ENCODE measurements at regions of chr3 and their contacts with region 1.

Region 1: GRCh38 chr3:52225452-52226228 is at the start of gene TLR9:
- DNase-seq: peak; percentile 77
- ATAC-seq: peak; percentile 87
- H3K4me3 Mint-ChIP-seq: peak within 1 kb of the TSS; percentile 90
- H3K27ac Mint-ChIP-seq: peak within 1 kb of the TSS; percentile 97
- H3K4me1 Mint-ChIP-seq: peaks cover 77% of the 10 kb centered on the region
- H3K27me3 Mint-ChIP-seq: no peaks in the 10 kb centered on the region
- CTCF ChIP-seq: no peak
- total RNA-seq, gene TLR9: 10.4 and 11.4 TPM in 2 replicates

Region 2: DNA sequence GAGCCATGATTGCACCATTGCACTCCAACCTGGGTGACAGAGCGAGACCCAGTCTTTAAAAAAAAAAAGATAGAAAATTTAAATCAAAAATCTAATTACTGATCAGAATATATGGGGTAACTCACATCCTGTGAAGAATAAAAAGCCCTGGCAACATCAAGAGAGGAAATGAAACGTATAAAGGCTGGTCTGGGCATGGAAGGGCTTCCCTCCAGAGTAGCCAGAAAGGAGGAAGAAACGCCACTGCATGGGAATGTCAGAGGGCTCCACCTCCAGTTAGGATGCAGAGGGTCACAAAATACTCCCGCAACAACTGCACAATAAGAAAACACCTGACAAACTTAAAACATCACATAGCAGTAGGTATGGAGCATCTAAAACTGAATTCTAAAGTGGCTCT is 317.6 kb before region 1 on chr3:
- CTCF ChIA-PET with region 1: no interaction called
- POLR2A ChIA-PET with region 1: no interaction called
- intact Hi-C with region 1: no loop called
- DNase-seq: no peak
- ATAC-seq: no peak
- H3K4me3 Mint-ChIP-seq: no peak overlapping the region
- H3K27ac Mint-ChIP-seq: no peak overlapping the region
- H3K4me1 Mint-ChIP-seq: no peaks in the 10 kb centered on the region
- H3K27me3 Mint-ChIP-seq: peaks cover 23% of the 10 kb centered on the region
- CTCF ChIP-seq: no peak

Region 3: DNA sequence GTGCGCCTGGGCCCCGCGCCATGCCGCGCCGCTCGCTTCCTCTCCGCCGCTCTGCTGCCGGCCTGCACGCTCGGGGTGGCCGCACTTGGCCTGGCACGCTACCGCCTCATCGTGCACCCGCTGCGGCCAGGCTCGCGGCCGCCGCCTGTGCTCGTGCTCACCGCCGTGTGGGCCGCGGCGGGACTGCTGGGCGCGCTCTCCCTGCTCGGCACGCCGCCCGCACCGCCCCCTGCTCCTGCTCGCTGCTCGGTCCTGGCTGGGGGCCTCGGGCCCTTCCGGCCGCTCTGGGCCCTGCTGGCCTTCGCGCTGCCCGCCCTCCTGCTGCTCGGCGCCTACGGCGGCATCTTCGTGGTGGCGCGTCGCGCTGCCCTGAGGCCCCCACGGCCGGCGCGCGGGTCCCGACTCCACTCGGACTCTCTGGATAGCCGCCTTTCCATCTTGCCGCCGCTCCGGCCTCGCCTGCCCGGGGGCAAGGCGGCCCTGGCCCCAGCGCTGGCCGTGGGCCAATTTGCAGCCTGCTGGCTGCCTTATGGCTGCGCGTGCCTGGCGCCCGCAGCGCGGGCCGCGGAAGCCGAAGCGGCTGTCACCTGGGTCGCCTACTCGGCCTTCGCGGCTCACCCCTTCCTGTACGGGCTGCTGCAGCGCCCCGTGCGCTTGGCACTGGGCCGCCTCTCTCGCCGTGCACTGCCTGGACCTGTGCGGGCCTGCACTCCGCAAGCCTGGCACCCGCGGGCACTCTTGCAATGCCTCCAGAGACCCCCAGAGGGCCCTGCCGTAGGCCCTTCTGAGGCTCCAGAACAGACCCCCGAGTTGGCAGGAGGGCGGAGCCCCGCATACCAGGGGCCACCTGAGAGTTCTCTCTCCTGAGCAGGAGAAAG is 269.5 kb before region 1 on chr3:
- CTCF ChIA-PET with region 1: no interaction called
- POLR2A ChIA-PET with region 1: no interaction called
- intact Hi-C with region 1: no loop called
- DNase-seq: peak; percentile 47
- ATAC-seq: peak; percentile 83
- H3K4me3 Mint-ChIP-seq: peak overlapping the region; percentile 24
- H3K27ac Mint-ChIP-seq: no peak overlapping the region
- H3K4me1 Mint-ChIP-seq: peaks cover 2% of the 10 kb centered on the region
- H3K27me3 Mint-ChIP-seq: peaks cover 19% of the 10 kb centered on the region
- CTCF ChIP-seq: no peak

Region 4: GRCh38 chr3:52093756-52094545 is 131.7 kb before region 1 on chr3:
- CTCF ChIA-PET with region 1: no interaction called
- POLR2A ChIA-PET with region 1: no interaction called
- intact Hi-C with region 1: no loop called
- DNase-seq: no peak
- ATAC-seq: no peak
- H3K4me3 Mint-ChIP-seq: no peak overlapping the region
- H3K27ac Mint-ChIP-seq: no peak overlapping the region
- H3K4me1 Mint-ChIP-seq: no peaks in the 10 kb centered on the region
- H3K27me3 Mint-ChIP-seq: no peaks in the 10 kb centered on the region
- CTCF ChIP-seq: no peak

Region 5: GRCh38 chr3:52197842-52198668 is 27.6 kb before region 1 on chr3 and contains the start of gene ALAS1:
- CTCF ChIA-PET with region 1: no interaction called
- POLR2A ChIA-PET with region 1: interaction called, 8 read pairs
- intact Hi-C with region 1: loop called (anchors 1 kb)
- DNase-seq: peak; percentile 98
- ATAC-seq: peak; percentile 96
- H3K4me3 Mint-ChIP-seq: peak within 1 kb of the TSS; percentile 97
- H3K27ac Mint-ChIP-seq: peak within 1 kb of the TSS; percentile 87
- H3K4me1 Mint-ChIP-seq: peaks cover 38% of the 10 kb centered on the region
- H3K27me3 Mint-ChIP-seq: no peaks in the 10 kb centered on the region
- CTCF ChIP-seq: no peak
- total RNA-seq, gene ALAS1: 25.9 and 27.6 TPM in 2 replicates

Region 6: GRCh38 chr3:52245322-52246263 is 20.0 kb after region 1 on chr3 and contains the start of gene PPM1M:
- CTCF ChIA-PET with region 1: interaction called, 9 read pairs
- POLR2A ChIA-PET with region 1: interaction called, 147 read pairs
- intact Hi-C with region 1: loop called (anchors 1 kb)
- DNase-seq: peak; percentile 61
- ATAC-seq: peak; percentile 44
- H3K4me3 Mint-ChIP-seq: peak within 1 kb of the TSS; percentile 84
- H3K27ac Mint-ChIP-seq: peak within 1 kb of the TSS; percentile 95
- H3K4me1 Mint-ChIP-seq: peaks cover 61% of the 10 kb centered on the region
- H3K27me3 Mint-ChIP-seq: no peaks in the 10 kb centered on the region
- CTCF ChIP-seq: no peak
- total RNA-seq, gene PPM1M: 44.4 and 44.6 TPM in 2 replicates

Region 7: GRCh38 chr3:52313774-52314188 is 88.1 kb after region 1 on chr3:
- CTCF ChIA-PET with region 1: interaction called, 3 read pairs
- POLR2A ChIA-PET with region 1: interaction called, 6 read pairs
- intact Hi-C with region 1: loop called (anchors 1 kb)
- DNase-seq: peak; percentile 55
- ATAC-seq: peak; percentile 77
- H3K4me3 Mint-ChIP-seq: peak overlapping the region; percentile 55
- H3K27ac Mint-ChIP-seq: peak overlapping the region; percentile 87
- H3K4me1 Mint-ChIP-seq: peaks cover 78% of the 10 kb centered on the region
- H3K27me3 Mint-ChIP-seq: no peaks in the 10 kb centered on the region
- CTCF ChIP-seq: no peak

Region 8: DNA sequence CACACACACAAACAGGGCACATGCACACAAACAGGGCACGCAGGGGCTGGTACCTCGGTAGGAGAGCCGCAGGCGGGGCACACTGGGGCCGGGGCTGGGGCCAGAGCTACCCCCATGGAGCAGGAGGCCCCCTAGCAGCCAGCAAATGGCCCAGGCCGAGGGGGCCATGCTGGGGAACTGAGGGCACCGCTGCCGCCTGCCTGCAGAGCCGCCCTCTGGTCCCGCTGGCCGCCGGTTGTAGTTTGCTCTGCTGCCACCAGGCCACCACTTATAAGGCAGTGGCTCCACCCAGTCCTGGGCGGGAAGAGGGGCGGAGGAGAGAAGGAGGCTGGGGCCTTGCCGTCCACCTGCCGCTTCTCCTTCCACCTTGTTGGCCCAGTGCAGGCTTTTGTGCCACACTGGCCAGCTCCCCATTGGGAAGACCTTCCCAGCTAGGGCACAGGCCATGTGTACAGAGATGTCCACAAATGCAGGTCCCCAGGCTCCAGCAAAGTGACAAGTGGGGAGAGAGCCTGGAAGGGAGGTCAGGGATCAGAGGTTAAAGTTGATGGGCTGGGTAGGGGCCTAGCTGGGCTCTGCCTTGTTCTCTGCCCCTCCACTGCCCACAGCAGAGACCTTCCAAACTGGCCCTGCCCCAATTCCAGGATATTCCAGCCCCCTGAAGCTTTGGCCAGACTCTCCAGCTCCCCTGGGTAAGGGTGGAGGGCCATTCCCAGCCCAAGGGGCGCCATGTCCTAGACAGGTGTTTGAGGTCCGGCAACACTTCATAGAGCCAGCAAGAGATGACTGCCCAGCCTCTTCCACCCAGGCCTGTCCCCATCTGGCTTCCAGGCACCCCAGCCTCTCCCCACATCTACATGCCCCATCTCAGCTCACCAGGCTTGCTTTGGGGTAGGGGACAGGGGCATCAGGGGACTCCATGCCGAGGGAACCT is 219.5 kb after region 1 on chr3 and contains the start of gene SEMA3G:
- CTCF ChIA-PET with region 1: interaction called, 5 read pairs
- POLR2A ChIA-PET with region 1: interaction called, 4 read pairs
- intact Hi-C with region 1: loop called (anchors 5 kb)
- DNase-seq: peak; percentile 62
- ATAC-seq: peak; percentile 97
- H3K4me3 Mint-ChIP-seq: no peak within 1 kb of the TSS
- H3K27ac Mint-ChIP-seq: no peak within 1 kb of the TSS
- H3K4me1 Mint-ChIP-seq: peaks cover 9% of the 10 kb centered on the region
- H3K27me3 Mint-ChIP-seq: peaks cover 3% of the 10 kb centered on the region
- CTCF ChIP-seq: no peak
- total RNA-seq, gene SEMA3G: not detected in 2 replicates

Measured in activated B cell treated with CpG ODN at 0.5 μM for 24 hours (primary cell).